Ascending aorta (tissue), 2 donors: ENCODE measurements at regions of chr13 and their contacts with region 1.

Region 1: GRCh38 chr13:76886292-76887075 is at the start of gene KCTD12:
- DNase-seq: peak; percentile 64 to 94
- H3K4me3 ChIP-seq: peak within 1 kb of the TSS; percentile 94 to 99
- H3K27ac ChIP-seq: peak within 1 kb of the TSS; percentile 87 to 97
- H3K4me1 ChIP-seq: peaks cover 0 to 9% of the 10 kb centered on the region in 2 donors
- H3K27me3 ChIP-seq: no peaks in the 10 kb centered on the region
- CTCF ChIP-seq: peak in 2 of 3 experiments; percentile 35 to 38
- total RNA-seq, gene KCTD12: 120 TPM

Region 2: GRCh38 chr13:75675421-75675820 is 1211.1 kb before region 1 on chr13:
- intact Hi-C with region 1: loop called (anchors 10 kb)
- DNase-seq: no peak
- H3K4me3 ChIP-seq: peak overlapping the region in 1 of 2 donors; percentile 57
- H3K27ac ChIP-seq: no peak overlapping the region
- H3K4me1 ChIP-seq: no peaks in the 10 kb centered on the region
- H3K27me3 ChIP-seq: no peaks in the 10 kb centered on the region
- CTCF ChIP-seq: no peak

Region 3: GRCh38 chr13:75870397-75870903 is 1016.0 kb before region 1 on chr13:
- intact Hi-C with region 1: loop called (anchors 5 kb)
- DNase-seq: no peak
- H3K4me3 ChIP-seq: peak overlapping the region; percentile 39 to 66
- H3K27ac ChIP-seq: peak overlapping the region in 1 of 2 donors; percentile 14
- H3K4me1 ChIP-seq: peaks cover 0 to 3% of the 10 kb centered on the region in 2 donors
- H3K27me3 ChIP-seq: no peaks in the 10 kb centered on the region
- CTCF ChIP-seq: peak; percentile 51 to 84 (median 77)

Region 4: DNA sequence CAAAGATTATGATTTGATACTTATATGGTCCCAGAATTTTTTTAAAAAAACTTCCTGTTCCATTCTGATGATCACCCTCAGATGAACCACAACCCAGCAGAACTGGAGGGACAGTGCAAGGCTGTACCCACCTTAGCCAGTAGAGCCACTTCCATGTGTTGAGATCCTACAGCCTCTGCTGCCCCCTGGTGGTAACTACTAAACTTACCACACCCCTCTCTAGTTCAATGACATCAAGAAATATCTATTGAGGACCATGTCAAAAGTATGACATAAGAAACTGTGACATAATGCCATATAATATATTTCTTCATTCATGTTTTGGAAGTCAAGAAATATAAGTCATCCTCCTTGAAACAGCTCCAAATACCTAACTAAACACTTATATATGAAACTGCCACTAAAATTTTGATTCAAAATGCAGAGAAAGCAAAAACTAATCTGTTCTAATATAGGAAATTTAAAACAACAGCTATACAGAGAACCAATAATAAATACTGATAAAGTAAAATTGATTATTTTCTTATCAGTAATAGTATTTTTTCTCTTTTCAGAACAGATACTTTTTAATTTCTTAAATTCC is 412.8 kb before region 1 on chr13:
- intact Hi-C with region 1: loop called (anchors 5 kb)
- DNase-seq: peak in 1 of 2 donors; percentile 87
- H3K4me3 ChIP-seq: no peak overlapping the region
- H3K27ac ChIP-seq: no peak overlapping the region
- H3K4me1 ChIP-seq: no peaks in the 10 kb centered on the region
- H3K27me3 ChIP-seq: no peaks in the 10 kb centered on the region
- CTCF ChIP-seq: peak; percentile 69 to 78 (median 77)

Region 5: DNA sequence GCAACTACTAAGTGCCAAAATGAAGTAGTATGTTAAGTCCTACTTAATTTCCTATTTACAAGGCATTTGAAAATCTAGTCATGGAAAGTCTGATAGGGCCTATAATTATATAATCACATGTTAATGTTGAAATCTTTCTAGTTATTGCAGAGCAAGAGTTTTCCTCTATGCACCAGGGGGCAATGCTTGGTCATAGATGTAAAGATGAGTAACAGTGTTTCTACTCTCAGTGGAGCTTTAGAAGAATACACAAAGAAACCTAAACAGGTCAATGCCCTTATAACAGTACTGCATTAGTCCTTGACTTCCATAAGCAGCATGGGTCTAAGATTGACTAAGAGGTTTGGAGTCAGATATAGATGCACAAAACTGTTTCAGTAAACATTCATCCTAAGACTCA is 218.9 kb before region 1 on chr13:
- intact Hi-C with region 1: loop called (anchors 5 kb)
- DNase-seq: no peak
- H3K4me3 ChIP-seq: no peak overlapping the region
- H3K27ac ChIP-seq: no peak overlapping the region
- H3K4me1 ChIP-seq: no peaks in the 10 kb centered on the region
- H3K27me3 ChIP-seq: no peaks in the 10 kb centered on the region
- CTCF ChIP-seq: peak in 1 of 3 experiments; percentile 25

Region 6: GRCh38 chr13:76991796-76992547 is 105.5 kb after region 1 on chr13 and contains the start of gene CLN5:
- intact Hi-C with region 1: loop called (anchors 5 kb)
- DNase-seq: peak; percentile 82 to 97
- H3K4me3 ChIP-seq: peak within 1 kb of the TSS; percentile 68 to 75
- H3K27ac ChIP-seq: peak within 1 kb of the TSS; percentile 80 to 93
- H3K4me1 ChIP-seq: peaks cover 0 to 9% of the 10 kb centered on the region in 2 donors
- H3K27me3 ChIP-seq: no peaks in the 10 kb centered on the region
- CTCF ChIP-seq: no peak
- total RNA-seq, gene CLN5: 2.0 TPM

Region 7: GRCh38 chr13:77009011-77009410 is 122.5 kb after region 1 on chr13:
- intact Hi-C with region 1: no loop called
- DNase-seq: no peak
- H3K4me3 ChIP-seq: no peak overlapping the region
- H3K27ac ChIP-seq: no peak overlapping the region
- H3K4me1 ChIP-seq: peaks cover 0 to 13% of the 10 kb centered on the region in 2 donors
- H3K27me3 ChIP-seq: no peaks in the 10 kb centered on the region
- CTCF ChIP-seq: no peak

Region 8: GRCh38 chr13:77329133-77329910 is 442.8 kb after region 1 on chr13:
- intact Hi-C with region 1: loop called (anchors 10 kb)
- DNase-seq: peak; percentile 60 to 93
- H3K4me3 ChIP-seq: peak overlapping the region; percentile 75 to 78
- H3K27ac ChIP-seq: peak overlapping the region; percentile 64 to 68
- H3K4me1 ChIP-seq: peaks cover 0 to 16% of the 10 kb centered on the region in 2 donors
- H3K27me3 ChIP-seq: no peaks in the 10 kb centered on the region
- CTCF ChIP-seq: no peak